ENCODE measurements at regions of chr15 and their contacts with region 1.

Region 1: DNA sequence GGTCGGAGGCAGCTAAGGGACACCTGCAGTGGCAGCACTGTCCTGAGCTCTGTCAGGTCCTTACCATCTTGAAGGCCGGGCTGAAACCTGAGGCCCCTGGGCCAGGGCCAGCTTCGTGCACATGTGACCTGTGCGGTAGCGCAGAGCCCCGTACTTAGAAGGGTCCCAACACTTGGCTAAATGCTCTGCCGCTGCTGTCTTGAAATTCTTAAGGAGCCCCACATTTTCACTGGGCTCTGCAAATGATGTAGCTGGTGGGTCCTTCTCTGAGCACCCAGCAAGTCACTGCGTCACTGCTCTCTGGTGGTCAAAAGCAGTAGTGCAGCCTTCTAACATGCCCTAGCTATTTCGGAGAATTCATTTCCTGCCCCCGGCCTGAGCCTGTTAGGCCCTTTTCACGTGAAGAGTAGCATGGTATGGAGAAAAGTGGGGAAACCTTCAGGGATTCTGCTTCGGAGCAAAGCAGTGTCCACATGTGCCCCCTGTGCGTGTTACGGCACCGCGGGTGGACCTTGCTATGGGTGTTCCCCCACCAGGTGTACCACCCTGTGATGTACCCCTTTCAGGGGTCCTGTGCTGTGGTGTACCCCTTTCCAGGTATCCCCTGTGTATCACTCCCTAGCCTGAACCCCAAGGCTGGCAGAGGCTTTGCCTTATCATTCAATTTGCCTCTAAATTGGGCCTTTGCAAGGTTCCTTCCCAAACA is 79.7 kb downstream of the TMEM266 start:
- DNase-seq: peak in 1 of 2 donors; percentile 74
- ATAC-seq: peak; percentile 74 to 89 (median 84)
- H3K4me3 ChIP-seq: peak overlapping the region in 6 of 10 donors; percentile 2 to 32 (median 29)
- H3K27ac ChIP-seq: peak overlapping the region in 2 of 10 donors; percentile 29 to 49
- H3K4me1 ChIP-seq: peaks cover 0 to 20% (median 14%) of the 10 kb centered on the region in 9 donors
- H3K27me3 ChIP-seq: peaks cover 0 to 9% (median under 1%) of the 10 kb centered on the region in 7 donors
- CTCF ChIP-seq: peak; percentile 87 to 93 (median 90)

Region 2: DNA sequence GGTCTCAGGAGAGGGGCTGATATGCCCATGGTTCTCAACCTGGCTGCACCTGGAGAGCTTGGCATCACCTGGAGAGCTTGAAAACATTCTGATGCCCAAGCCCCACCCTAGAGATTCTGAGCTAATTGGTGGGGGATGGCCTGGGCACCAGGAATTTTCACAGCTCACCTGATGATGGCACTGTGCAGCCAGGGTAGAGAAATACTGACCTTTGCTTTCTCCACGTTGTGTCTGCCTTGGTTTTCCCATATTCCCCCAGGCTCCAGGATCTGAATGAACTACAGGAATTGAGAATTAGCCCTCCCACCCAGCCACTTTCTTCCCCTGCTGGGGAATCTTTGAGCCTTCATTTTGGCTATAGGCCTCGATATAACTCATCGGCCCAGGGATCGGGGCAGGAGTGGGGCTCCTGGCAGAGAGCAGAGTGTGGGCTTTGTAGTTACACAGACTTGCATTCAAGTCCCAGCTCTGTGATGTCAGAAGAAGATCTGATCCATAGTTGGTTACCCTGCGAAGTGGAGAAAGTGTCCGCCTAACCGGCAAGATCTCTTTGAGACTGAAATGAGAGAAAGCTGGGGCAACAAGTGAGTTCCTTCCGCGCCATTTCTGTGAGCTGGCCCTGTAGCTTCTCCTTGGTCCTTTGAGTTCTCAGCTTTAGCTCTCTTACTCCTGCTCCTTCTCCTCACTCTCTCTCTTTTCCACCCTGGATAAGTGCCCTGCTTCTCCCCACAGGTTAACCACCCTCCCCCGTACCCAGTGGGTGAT is 329.4 kb before region 1 on chr15:
- intact Hi-C with region 1: loop called in 5 of 10 experiments (anchors 5 to 10 kb)
- DNase-seq: no peak
- ATAC-seq: peak in 5 of 8 donors; percentile 47 to 59 (median 51)
- H3K4me3 ChIP-seq: no peak overlapping the region
- H3K27ac ChIP-seq: no peak overlapping the region
- H3K4me1 ChIP-seq: no peaks in the 10 kb centered on the region
- H3K27me3 ChIP-seq: peaks cover 0 to 8% (median 0%) of the 10 kb centered on the region in 7 donors
- CTCF ChIP-seq: peak in 7 of 9 donors; percentile 32 to 55 (median 47)

Region 3: GRCh38 chr15:75817138-75817935 is 322.2 kb before region 1 on chr15:
- intact Hi-C with region 1: loop called in 5 of 10 experiments (anchors 5 to 10 kb)
- DNase-seq: no peak
- ATAC-seq: no peak
- H3K4me3 ChIP-seq: peak overlapping the region in 7 of 10 donors; percentile 10 to 45 (median 34)
- H3K27ac ChIP-seq: peak overlapping the region in 2 of 10 donors; percentile 23 to 60
- H3K4me1 ChIP-seq: peaks cover 0 to 8% (median 0%) of the 10 kb centered on the region in 9 donors
- H3K27me3 ChIP-seq: no peaks in the 10 kb centered on the region
- CTCF ChIP-seq: no peak

Region 4: DNA sequence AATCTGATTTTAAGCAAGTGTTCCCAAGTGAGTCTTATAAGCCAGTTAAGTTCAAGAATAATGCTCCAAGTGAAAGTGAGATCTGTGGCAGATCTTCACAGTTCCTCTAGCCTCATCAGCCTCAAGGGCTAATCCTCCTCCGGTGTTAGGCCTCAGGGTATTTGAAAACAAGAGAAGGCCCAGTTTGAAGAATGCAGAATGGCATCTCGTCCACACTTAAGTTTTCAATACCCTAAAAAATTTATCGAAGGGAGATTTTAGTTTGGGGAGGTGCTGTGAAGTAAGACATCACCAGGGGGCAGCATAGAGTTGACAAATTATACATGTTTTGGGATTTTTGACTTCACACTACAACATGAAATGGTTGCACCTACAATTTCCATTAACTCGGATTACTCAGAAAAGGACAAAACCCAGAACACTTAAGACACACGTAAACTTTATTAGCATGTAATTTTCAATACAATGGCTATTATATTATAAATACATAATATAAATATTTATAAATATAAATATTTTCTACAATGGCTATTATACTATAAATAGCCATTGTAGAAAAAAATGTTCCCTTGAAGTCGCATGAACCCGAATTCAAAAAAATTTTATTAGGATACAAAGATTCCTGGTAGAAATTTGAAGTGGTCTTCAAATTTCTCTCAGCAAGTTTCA is 82.1 kb before region 1 on chr15:
- intact Hi-C with region 1: loop called (anchors 1 to 10 kb)
- DNase-seq: peak in 1 of 2 donors; percentile 14
- ATAC-seq: no peak
- H3K4me3 ChIP-seq: peak overlapping the region in 3 of 10 donors; percentile 4 to 20 (median 5)
- H3K27ac ChIP-seq: no peak overlapping the region
- H3K4me1 ChIP-seq: peaks cover 0 to 26% (median 11%) of the 10 kb centered on the region in 9 donors
- H3K27me3 ChIP-seq: peaks cover 0 to 85% (median 62%) of the 10 kb centered on the region in 7 donors
- CTCF ChIP-seq: peak; percentile 40 to 86 (median 76)